ENCODE measurements at regions of chr5 and their contacts with region 1.

Region 1: GRCh38 chr5:124583469-124584350 is 162.7 kb downstream of the ZNF608 start:
- DNase-seq: peak; percentile 38
- H3K4me3 Mint-ChIP-seq: no peak overlapping the region
- H3K27ac Mint-ChIP-seq: no peak overlapping the region
- H3K4me1 Mint-ChIP-seq: peaks cover 13% of the 10 kb centered on the region
- H3K27me3 Mint-ChIP-seq: peaks cover 2% of the 10 kb centered on the region

Region 2: DNA sequence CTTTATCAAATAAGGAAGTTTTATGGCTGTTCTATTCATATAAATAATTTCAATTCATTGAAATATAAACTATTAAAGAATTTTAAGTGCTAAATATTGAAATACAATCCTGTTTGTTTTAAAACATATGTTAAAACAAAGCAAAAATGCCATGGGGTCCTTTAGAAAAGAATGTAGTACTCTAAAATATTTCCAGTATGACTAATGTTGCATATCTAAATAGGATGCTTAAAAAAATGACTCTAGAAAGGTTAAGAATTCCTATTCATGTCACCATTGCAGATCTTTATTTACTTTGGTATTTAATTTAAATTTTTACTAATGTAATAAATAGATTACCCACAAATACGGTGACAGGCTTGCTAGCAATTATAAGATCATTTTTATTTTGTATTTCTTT is 30.4 kb after region 1 on chr5:
- CTCF ChIA-PET with region 1: no interaction called
- POLR2A ChIA-PET with region 1: no interaction called
- intact Hi-C with region 1: no loop called
- DNase-seq: no peak
- H3K4me3 Mint-ChIP-seq: no peak overlapping the region
- H3K27ac Mint-ChIP-seq: no peak overlapping the region
- H3K4me1 Mint-ChIP-seq: no peaks in the 10 kb centered on the region
- H3K27me3 Mint-ChIP-seq: peaks cover 1% of the 10 kb centered on the region

Region 3: GRCh38 chr5:124649491-124650146 is 65.9 kb after region 1 on chr5:
- CTCF ChIA-PET with region 1: no interaction called
- POLR2A ChIA-PET with region 1: no interaction called
- intact Hi-C with region 1: loop called (anchors 1 kb)
- DNase-seq: peak; percentile 71
- H3K4me3 Mint-ChIP-seq: peak overlapping the region; percentile 62
- H3K27ac Mint-ChIP-seq: peak overlapping the region; percentile 71
- H3K4me1 Mint-ChIP-seq: peaks cover 24% of the 10 kb centered on the region
- H3K27me3 Mint-ChIP-seq: peaks cover 28% of the 10 kb centered on the region